MCF 10A (cell line): ENCODE measurements at regions of chr1 and their contacts with region 1.

Region 1: DNA sequence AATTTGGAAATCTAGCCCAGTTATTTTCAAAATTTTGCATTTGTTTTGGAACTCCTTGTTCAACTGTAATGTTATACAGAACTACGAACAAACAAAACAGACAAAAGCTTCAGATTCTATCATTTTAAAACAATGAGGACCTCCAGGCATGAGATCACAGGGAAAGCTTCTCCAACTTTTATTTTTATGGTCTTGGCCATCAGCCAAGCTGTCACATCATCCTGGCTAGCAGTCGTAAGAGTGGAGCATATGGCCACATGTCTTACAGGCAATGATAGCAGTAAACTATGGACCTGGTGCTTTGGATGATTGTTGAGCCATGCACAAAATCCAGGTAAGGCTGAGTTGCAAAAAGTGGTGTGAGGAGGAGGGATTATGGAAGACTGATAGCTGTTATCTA is 299.6 kb downstream of the LMX1A start:
- DNase-seq: peak; percentile 21
- H3K4me3 Mint-ChIP-seq: no peak overlapping the region
- H3K27ac Mint-ChIP-seq: no peak overlapping the region
- H3K4me1 Mint-ChIP-seq: peaks cover 11% of the 10 kb centered on the region
- H3K27me3 Mint-ChIP-seq: no peaks in the 10 kb centered on the region
- CTCF ChIP-seq: no peak

Region 2: DNA sequence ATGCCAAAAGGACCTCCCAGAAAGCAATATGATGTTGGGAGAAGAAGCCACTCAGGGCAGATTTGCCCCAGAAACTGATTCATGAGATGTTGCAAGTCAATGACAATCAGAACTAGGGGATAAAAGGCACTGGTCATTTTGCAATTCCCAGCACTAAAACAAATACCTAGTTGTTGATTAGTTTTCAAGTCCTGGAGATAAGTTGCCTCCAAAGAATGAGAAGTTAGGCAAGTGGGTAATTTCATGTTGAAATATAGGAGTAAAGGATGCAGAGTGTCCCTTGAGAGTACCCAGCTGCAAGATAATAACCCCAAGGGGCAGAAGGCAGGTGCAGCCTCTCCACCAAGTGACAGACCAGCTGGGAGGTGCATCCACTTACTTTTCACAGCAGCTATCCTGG is 134.3 kb before region 1 on chr1:
- CTCF ChIA-PET with region 1: interaction called, 3 read pairs
- POLR2A ChIA-PET with region 1: no interaction called
- intact Hi-C with region 1: loop called (anchors 5 kb)
- DNase-seq: no peak
- H3K4me3 Mint-ChIP-seq: no peak overlapping the region
- H3K27ac Mint-ChIP-seq: no peak overlapping the region
- H3K4me1 Mint-ChIP-seq: no peaks in the 10 kb centered on the region
- H3K27me3 Mint-ChIP-seq: peaks cover 9% of the 10 kb centered on the region
- CTCF ChIP-seq: no peak

Region 3: GRCh38 chr1:165114022-165114888 is 57.3 kb after region 1 on chr1:
- CTCF ChIA-PET with region 1: no interaction called
- POLR2A ChIA-PET with region 1: no interaction called
- intact Hi-C with region 1: no loop called
- DNase-seq: peak; percentile 85
- H3K4me3 Mint-ChIP-seq: no peak overlapping the region
- H3K27ac Mint-ChIP-seq: no peak overlapping the region
- H3K4me1 Mint-ChIP-seq: peaks cover 17% of the 10 kb centered on the region
- H3K27me3 Mint-ChIP-seq: peaks cover 16% of the 10 kb centered on the region
- CTCF ChIP-seq: peak; percentile 96